IMR-90 (cell line): ENCODE measurements at regions of chr1 and their contacts with region 1.

Region 1: DNA sequence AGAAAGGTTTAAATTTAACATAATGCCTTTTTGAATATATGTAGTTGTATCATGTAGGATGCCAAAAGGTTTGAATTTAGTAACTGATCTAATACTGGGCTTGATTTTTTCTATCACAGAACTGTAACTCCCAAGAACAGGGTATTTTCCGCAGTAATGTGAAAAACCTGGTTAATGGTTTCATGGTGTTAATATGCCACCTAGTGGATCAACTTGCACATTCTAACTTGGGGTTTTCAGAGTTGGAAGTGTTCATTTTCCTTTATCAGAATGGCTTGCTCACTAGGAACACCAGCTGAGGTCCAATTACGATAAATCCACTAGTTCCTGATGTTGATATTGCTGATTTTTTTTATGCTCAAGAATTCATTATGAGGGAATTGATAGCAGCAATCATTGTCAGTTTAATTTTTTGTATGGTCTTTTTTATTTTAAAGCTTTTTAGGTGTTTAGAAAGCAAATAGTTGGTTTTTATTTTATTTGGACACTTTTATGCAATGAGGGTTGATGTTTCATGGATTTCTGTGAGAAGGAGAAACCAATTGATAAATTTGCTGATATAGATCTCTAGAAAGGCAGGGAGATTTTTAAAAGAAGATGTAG is 157.2 kb downstream of the PLA2G4A start:
- DNase-seq: peak; percentile 78
- ATAC-seq: peak; percentile 72
- H3K4me3 ChIP-seq: no peak overlapping the region
- H3K27ac ChIP-seq: no peak overlapping the region
- H3K4me1 ChIP-seq: peaks cover 6% of the 10 kb centered on the region
- H3K27me3 ChIP-seq: no peaks in the 10 kb centered on the region
- CTCF ChIP-seq: peak; percentile 90
- POLR2A ChIP-seq: 0 out of 2 replicates have a peak, but pooled peaks have one; percentile 38
- RAD21 ChIP-seq: peak; percentile 96

Region 2: GRCh38 chr1:186375088-186375953 is 610.7 kb before region 1 on chr1 and contains the starts of genes ODR4 and TPR:
- CTCF ChIA-PET with region 1: interaction called, 6 read pairs
- POLR2A ChIA-PET with region 1: no interaction called
- dilution Hi-C with region 1: no loop called
- in situ Hi-C with region 1: no loop called
- intact Hi-C with region 1: loop called (anchors 1 kb)
- DNase-seq: peak; percentile 100
- ATAC-seq: peak; percentile 92
- H3K4me3 ChIP-seq: peak within 1 kb of the TSS; percentile 62
- H3K27ac ChIP-seq: peak within 1 kb of the TSS; percentile 92
- H3K4me1 ChIP-seq: peaks cover 2% of the 10 kb centered on the region; the same call in 1 of the 2 replicates
- H3K27me3 ChIP-seq: no peaks in the 10 kb centered on the region
- CTCF ChIP-seq: peak; percentile 92
- POLR2A ChIP-seq: peak; percentile 91
- RAD21 ChIP-seq: peak; percentile 38
- total RNA-seq, gene ODR4: 9.7 and 14.2 TPM in 2 replicates
- total RNA-seq, gene TPR: 60.4 and 63.6 TPM in 2 replicates

Region 3: GRCh38 chr1:186482661-186483255 is 503.2 kb before region 1 on chr1:
- CTCF ChIA-PET with region 1: no interaction called
- POLR2A ChIA-PET with region 1: no interaction called
- dilution Hi-C with region 1: no loop called
- in situ Hi-C with region 1: loop called (anchors 5 kb)
- intact Hi-C with region 1: loop called (anchors 1 kb)
- DNase-seq: peak; percentile 75
- ATAC-seq: peak; percentile 94
- H3K4me3 ChIP-seq: no peak overlapping the region
- H3K27ac ChIP-seq: no peak overlapping the region
- H3K4me1 ChIP-seq: no peaks in the 10 kb centered on the region
- H3K27me3 ChIP-seq: no peaks in the 10 kb centered on the region
- CTCF ChIP-seq: peak; percentile 96
- POLR2A ChIP-seq: peak; percentile 51
- RAD21 ChIP-seq: peak; percentile 99

Region 4: GRCh38 chr1:186611156-186611555 is 374.8 kb before region 1 on chr1:
- CTCF ChIA-PET with region 1: interaction called, 4 read pairs
- POLR2A ChIA-PET with region 1: no interaction called
- dilution Hi-C with region 1: loop called (anchors 25 kb)
- in situ Hi-C with region 1: loop called (anchors 5 kb)
- intact Hi-C with region 1: no loop called
- DNase-seq: no peak
- ATAC-seq: no peak
- H3K4me3 ChIP-seq: no peak overlapping the region
- H3K27ac ChIP-seq: no peak overlapping the region
- H3K4me1 ChIP-seq: no peaks in the 10 kb centered on the region
- H3K27me3 ChIP-seq: no peaks in the 10 kb centered on the region
- CTCF ChIP-seq: no peak
- POLR2A ChIP-seq: no peak
- RAD21 ChIP-seq: no peak

Region 5: DNA sequence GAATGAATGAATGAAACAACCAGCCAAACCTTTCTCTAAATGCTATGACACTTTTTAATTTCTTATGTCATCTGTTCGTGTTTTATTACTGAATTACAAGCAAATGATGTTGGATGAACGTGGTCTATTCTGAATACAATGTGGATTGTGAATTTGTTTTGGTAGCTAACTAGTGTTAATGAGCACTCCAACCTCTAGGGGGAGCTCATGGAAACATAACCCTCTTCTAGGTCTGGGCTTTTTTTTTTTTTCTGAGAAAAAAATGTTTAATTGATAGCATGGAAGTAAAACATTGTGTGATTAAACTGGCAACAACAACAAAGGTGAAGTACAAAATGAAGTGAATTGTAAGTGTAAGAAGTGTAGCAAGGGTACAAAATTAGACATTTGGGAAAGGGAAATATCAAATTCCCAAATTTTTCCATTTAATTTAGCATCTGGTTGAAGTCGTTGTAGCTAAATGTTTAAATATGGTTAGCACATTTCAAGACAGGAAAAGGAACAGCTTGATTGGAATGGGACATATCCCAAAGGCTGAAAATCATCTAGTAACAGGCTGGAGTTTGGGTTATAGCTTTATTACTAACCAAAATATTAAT is 263.2 kb before region 1 on chr1:
- CTCF ChIA-PET with region 1: interaction called, 3 read pairs
- POLR2A ChIA-PET with region 1: no interaction called
- dilution Hi-C with region 1: no loop called
- in situ Hi-C with region 1: no loop called
- intact Hi-C with region 1: loop called (anchors 5 kb)
- DNase-seq: peak; percentile 52
- ATAC-seq: peak; percentile 49; the same call in 1 of the 2 replicates
- H3K4me3 ChIP-seq: no peak overlapping the region
- H3K27ac ChIP-seq: no peak overlapping the region
- H3K4me1 ChIP-seq: no peaks in the 10 kb centered on the region
- H3K27me3 ChIP-seq: no peaks in the 10 kb centered on the region
- CTCF ChIP-seq: peak; percentile 57
- POLR2A ChIP-seq: no peak
- RAD21 ChIP-seq: peak; percentile 50

Region 6: DNA sequence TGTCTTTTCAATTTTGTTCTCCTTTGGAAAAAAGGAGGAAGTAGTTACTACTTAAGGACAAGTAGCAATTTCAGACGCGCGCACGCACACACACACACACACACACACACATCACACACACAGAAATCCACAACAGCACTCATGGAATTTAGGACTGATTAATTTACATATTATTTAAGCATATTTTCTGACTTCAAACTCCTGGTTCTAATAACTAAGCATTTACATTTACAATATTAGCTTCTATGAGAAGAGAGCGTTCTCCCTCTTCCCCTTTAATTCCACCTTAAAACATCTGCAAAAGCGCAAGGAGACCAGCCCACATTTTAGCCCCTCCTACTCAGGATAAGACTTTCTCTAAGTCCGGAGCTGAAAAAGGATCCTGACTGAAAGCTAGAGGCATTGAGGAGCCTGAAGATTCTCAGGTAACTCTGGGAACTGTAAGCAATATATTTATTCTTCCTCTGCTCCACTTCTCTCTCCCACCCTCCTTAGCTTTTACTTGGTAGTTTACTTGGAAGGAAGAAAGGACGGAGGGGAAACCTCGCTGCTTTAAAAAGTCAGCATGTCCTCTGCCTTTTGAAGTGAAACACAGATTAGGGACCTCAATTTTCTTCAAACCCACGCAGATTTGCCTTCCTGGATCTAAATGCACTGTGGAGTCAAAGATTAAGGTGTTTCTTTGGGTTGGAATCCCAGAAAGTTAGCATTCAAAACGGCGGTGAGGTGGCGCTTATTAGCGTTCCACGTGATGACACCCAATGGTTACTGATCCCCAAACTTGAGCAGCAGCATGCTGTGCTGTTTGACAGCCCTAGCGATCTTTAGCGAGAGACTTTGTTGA is 157.2 kb before region 1 on chr1 and contains the start of gene PLA2G4A:
- CTCF ChIA-PET with region 1: no interaction called
- POLR2A ChIA-PET with region 1: no interaction called
- dilution Hi-C with region 1: no loop called
- in situ Hi-C with region 1: no loop called
- intact Hi-C with region 1: loop called (anchors 5 kb)
- DNase-seq: peak; percentile 73
- ATAC-seq: peak; percentile 98
- H3K4me3 ChIP-seq: peak within 1 kb of the TSS; percentile 67
- H3K27ac ChIP-seq: no peak within 1 kb of the TSS
- H3K4me1 ChIP-seq: no peaks in the 10 kb centered on the region
- H3K27me3 ChIP-seq: no peaks in the 10 kb centered on the region
- CTCF ChIP-seq: no peak
- POLR2A ChIP-seq: no peak
- RAD21 ChIP-seq: no peak
- total RNA-seq, gene PLA2G4A: 3.8 and 4.4 TPM in 2 replicates

Region 7: GRCh38 chr1:186950547-186950946 is 35.4 kb before region 1 on chr1:
- CTCF ChIA-PET with region 1: no interaction called
- POLR2A ChIA-PET with region 1: no interaction called
- dilution Hi-C with region 1: no loop called
- in situ Hi-C with region 1: no loop called
- intact Hi-C with region 1: no loop called
- DNase-seq: peak; percentile 31
- ATAC-seq: no peak
- H3K4me3 ChIP-seq: no peak overlapping the region
- H3K27ac ChIP-seq: no peak overlapping the region
- H3K4me1 ChIP-seq: no peaks in the 10 kb centered on the region
- H3K27me3 ChIP-seq: no peaks in the 10 kb centered on the region
- CTCF ChIP-seq: no peak
- POLR2A ChIP-seq: no peak
- RAD21 ChIP-seq: no peak